ENCODE measurements at regions of chr3 and their contacts with region 1.

Region 1: DNA sequence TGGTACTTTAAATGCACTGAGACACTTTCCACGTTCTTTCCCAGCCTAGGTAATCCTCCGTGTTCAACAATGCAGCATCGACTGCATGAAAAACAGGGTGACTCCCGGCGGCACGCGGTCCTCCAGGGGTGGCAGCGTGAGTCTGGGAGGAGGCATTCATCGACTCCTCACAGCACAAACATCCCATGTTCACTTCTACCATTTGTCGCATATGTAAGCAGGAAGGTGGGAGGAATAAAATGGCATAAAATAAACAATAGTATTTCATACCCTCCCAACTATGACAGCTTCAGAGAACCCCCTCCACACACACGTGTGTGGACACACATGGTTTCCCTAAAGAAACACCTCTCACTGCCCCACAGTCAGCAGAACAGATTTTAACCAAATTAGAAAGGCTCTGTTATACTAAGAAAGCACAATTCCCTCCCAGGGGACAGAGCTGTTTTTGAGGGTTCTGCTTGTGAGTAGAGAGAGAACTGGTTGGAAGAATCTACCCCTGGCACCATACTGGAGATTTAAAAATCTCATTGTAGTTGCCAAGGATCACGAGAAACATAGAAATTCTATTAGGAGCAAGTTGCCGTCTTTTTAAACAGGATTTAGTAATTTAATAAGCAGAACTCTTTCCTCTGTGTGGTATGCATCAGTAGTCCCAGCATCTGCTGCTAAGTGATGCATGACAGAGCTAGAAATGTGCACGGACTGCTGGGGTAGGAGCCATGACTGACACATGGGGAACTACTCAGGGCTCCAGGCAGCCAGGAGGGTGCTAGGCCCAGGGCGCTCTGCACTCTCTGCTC is 6.0 kb downstream of the FAM43A start:
- DNase-seq: no peak
- ATAC-seq: no peak
- H3K4me3 ChIP-seq: no peak overlapping the region
- H3K27ac ChIP-seq: no peak overlapping the region
- H3K4me1 ChIP-seq: peaks cover 0 to 14% (median 3%) of the 10 kb centered on the region in 4 donors
- H3K27me3 ChIP-seq: peaks cover 0 to 9% of the 10 kb centered on the region in 2 donors
- CTCF ChIP-seq: no peak
- POLR2A ChIP-seq: no peak

Region 2: GRCh38 chr3:195117978-195118581 is 426.4 kb after region 1 on chr3:
- intact Hi-C with region 1: loop called in 1 of 2 experiments (anchors 10 kb)
- DNase-seq: no peak
- ATAC-seq: peak; percentile 53 to 65 (median 58)
- H3K4me3 ChIP-seq: no peak overlapping the region
- H3K27ac ChIP-seq: no peak overlapping the region
- H3K4me1 ChIP-seq: no peaks in the 10 kb centered on the region
- H3K27me3 ChIP-seq: no peaks in the 10 kb centered on the region
- CTCF ChIP-seq: peak in 1 of 4 donors; percentile 7
- POLR2A ChIP-seq: no peak

Measured in right lobe of liver (tissue), 6 donors.